Right cardiac atrium (tissue), 5 donors: ENCODE measurements at regions of chr1 and their contacts with region 1.

Region 1: GRCh38 chr1:174165471-174166137 is 6.3 kb downstream of the RABGAP1L start:
- DNase-seq: peak; percentile 54 to 80 (median 58)
- ATAC-seq: peak; percentile 47 to 58
- H3K4me3 ChIP-seq: no peak overlapping the region
- H3K27ac ChIP-seq: peak overlapping the region; percentile 68
- H3K4me1 ChIP-seq: peaks cover 5% of the 10 kb centered on the region
- H3K27me3 ChIP-seq: no peaks in the 10 kb centered on the region

Region 2: GRCh38 chr1:174194451-174194850 is 28.8 kb after region 1 on chr1:
- intact Hi-C with region 1: no loop called
- DNase-seq: peak in 1 of 3 donors; percentile 34
- ATAC-seq: no peak
- H3K4me3 ChIP-seq: no peak overlapping the region
- H3K27ac ChIP-seq: no peak overlapping the region
- H3K4me1 ChIP-seq: peaks cover 3% of the 10 kb centered on the region
- H3K27me3 ChIP-seq: no peaks in the 10 kb centered on the region

Region 3: GRCh38 chr1:174204697-174205308 is 39.2 kb after region 1 on chr1:
- intact Hi-C with region 1: loop called in 3 of 4 experiments (anchors 5 to 10 kb)
- DNase-seq: no peak
- ATAC-seq: no peak
- H3K4me3 ChIP-seq: no peak overlapping the region
- H3K27ac ChIP-seq: peak overlapping the region; percentile 91
- H3K4me1 ChIP-seq: peaks cover 2% of the 10 kb centered on the region
- H3K27me3 ChIP-seq: no peaks in the 10 kb centered on the region

Region 4: GRCh38 chr1:174262349-174263241 is 97.0 kb after region 1 on chr1:
- intact Hi-C with region 1: no loop called
- DNase-seq: no peak
- ATAC-seq: peak; percentile 52 to 58
- H3K4me3 ChIP-seq: no peak overlapping the region
- H3K27ac ChIP-seq: peak overlapping the region; percentile 48
- H3K4me1 ChIP-seq: no peaks in the 10 kb centered on the region
- H3K27me3 ChIP-seq: no peaks in the 10 kb centered on the region

Region 5: DNA sequence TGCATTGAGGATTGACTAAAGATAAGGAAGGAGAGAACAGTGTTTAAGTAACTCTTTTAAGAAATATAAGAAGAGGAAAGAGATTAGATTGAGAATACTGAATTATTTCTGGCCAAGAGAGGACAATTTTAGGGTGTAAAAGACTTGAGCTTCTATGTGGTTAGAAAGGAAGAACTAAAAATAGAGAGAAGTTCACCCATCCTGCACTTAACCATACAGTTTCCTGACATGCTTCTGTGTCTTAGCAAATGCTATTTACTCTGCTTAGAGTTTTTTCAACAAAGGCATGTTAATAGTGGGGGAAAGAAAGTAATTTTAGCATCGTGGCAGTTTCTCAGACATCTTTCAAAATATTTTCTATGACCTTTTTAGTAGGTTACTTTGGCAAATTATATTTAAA is 159.3 kb after region 1 on chr1:
- intact Hi-C with region 1: no loop called
- DNase-seq: no peak
- ATAC-seq: no peak
- H3K4me3 ChIP-seq: no peak overlapping the region
- H3K27ac ChIP-seq: no peak overlapping the region
- H3K4me1 ChIP-seq: no peaks in the 10 kb centered on the region
- H3K27me3 ChIP-seq: no peaks in the 10 kb centered on the region